ENCODE measurements at regions of chr12 and their contacts with region 1.

Region 1: DNA sequence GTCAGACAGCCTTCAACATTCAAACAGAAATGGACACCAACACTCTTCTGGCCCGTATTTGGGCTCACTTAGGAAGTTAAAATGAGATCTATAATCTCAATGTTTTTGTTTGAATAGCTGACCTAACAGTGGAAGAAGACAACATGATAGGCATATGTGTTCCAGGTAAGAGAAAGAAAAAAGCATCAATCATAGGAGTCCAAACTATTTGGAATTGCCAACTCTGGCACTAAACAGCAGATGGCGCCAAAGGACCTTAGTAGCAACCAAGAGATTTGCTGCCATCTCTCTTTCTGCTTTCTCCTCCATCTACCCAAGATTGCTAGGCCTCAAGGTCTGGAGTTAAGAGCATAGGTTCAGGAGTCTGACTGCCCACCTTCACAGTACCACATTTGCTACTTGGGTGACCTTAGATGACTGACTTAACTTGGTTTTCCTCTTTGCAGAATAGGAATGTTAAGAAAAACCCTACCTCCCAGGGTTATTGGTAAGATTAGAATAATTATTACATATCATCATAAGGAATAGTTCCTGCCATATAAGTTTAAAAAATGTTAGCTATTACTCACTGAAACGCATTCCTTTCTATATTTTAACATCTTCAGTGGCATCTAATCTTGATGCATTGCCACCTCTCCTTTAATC is 30.2 kb downstream of the PEX5 start:
- DNase-seq: peak in 1 of 3 donors; percentile 85
- ATAC-seq: peak; percentile 76
- H3K4me3 ChIP-seq: no peak overlapping the region
- H3K4me1 ChIP-seq: no peaks in the 10 kb centered on the region
- CTCF ChIP-seq: peak; percentile 76

Region 2: GRCh38 chr12:7068240-7068993 is 151.3 kb before region 1 on chr12:
- intact Hi-C with region 1: no loop called
- DNase-seq: no peak
- ATAC-seq: no peak
- H3K4me3 ChIP-seq: no peak overlapping the region
- H3K4me1 ChIP-seq: no peaks in the 10 kb centered on the region
- CTCF ChIP-seq: no peak

Region 3: DNA sequence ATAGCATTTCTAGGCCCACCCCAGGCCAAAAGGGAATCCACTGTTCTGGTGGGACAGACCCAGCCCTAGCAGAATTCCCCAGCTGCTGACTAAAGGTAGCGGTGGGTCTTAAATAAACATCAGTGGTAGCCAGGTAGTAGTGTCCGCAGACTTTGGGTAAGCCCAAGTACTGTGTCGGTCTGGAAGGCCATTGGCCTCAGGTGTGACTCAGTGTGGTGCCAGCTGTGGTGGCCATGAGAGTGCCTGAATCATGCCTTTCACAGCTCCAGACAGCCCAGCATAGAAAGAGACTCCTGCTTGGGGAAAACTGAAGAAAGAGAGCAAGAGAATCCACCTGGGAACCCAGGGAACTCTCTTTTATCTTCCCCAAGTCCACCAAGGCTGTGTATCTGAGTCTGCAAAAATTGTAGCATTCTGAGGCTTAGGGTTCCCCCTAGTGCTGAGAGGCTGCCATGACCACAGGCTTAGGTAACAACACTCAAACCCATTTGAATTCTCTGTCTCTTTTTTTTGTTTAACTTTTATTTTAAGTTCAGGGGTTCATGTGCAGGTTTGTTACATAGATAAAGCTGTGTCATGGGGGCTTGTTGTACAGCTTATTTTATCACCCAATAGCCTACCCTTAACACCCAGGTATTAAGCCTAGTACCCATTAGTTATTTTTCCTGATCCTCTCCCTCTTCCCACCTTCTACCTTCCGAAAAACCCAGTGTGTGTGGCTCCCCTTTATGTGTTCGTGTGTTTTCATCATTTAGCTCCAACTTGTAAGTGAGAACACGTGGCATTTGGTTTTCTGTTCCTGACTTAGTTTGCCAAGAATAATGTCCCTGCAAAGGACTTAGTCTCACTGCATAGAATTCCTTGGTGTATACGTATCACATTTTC is 240.9 kb after region 1 on chr12:
- intact Hi-C with region 1: loop called in 1 of 2 experiments (anchors 2 kb)
- DNase-seq: peak in 2 of 3 donors; percentile 55 to 79
- ATAC-seq: peak; percentile 77
- H3K4me3 ChIP-seq: no peak overlapping the region
- H3K4me1 ChIP-seq: no peaks in the 10 kb centered on the region
- CTCF ChIP-seq: peak; percentile 59

Region 4: GRCh38 chr12:7638760-7639555 is 419.2 kb after region 1 on chr12:
- intact Hi-C with region 1: loop called (anchors 5 to 10 kb)
- DNase-seq: peak; percentile 45 to 87 (median 63)
- ATAC-seq: peak; percentile 96
- H3K4me3 ChIP-seq: no peak overlapping the region
- H3K4me1 ChIP-seq: no peaks in the 10 kb centered on the region
- CTCF ChIP-seq: peak; percentile 67